ENCODE measurements at regions of chr5 and their contacts with region 1.

Region 1: GRCh38 chr5:179361037-179361603 is 15.9 kb upstream of the ADAMTS2 start:
- DNase-seq: no peak
- H3K4me3 ChIP-seq: no peak overlapping the region
- H3K27ac ChIP-seq: no peak overlapping the region
- H3K4me1 ChIP-seq: no peaks in the 10 kb centered on the region
- H3K27me3 ChIP-seq: no peaks in the 10 kb centered on the region
- CTCF ChIP-seq: peak in 2 of 3 experiments; percentile 12 to 23; a peak in 2 of 4 replicates
- EP300 ChIP-seq: no peak
- POLR2A ChIP-seq: no peak
- RAD21 ChIP-seq: peak in 1 of 2 experiments; percentile 30; a peak in 1 of 4 replicates

Region 2: GRCh38 chr5:179258922-179259730 is 102.0 kb before region 1 on chr5:
- CTCF ChIA-PET with region 1: no interaction called
- POLR2A ChIA-PET with region 1: no interaction called
- DNase-seq: peak in 1 of 2 experiments; percentile 41
- H3K4me3 ChIP-seq: no peak overlapping the region
- H3K27ac ChIP-seq: no peak overlapping the region
- H3K4me1 ChIP-seq: peaks cover 0 to 4% (median 2%) of the 10 kb centered on the region in 4 experiments; a peak in 3 of 7 replicates
- H3K27me3 ChIP-seq: no peaks in the 10 kb centered on the region
- CTCF ChIP-seq: no peak
- EP300 ChIP-seq: no peak
- POLR2A ChIP-seq: no peak
- RAD21 ChIP-seq: no peak

Region 3: DNA sequence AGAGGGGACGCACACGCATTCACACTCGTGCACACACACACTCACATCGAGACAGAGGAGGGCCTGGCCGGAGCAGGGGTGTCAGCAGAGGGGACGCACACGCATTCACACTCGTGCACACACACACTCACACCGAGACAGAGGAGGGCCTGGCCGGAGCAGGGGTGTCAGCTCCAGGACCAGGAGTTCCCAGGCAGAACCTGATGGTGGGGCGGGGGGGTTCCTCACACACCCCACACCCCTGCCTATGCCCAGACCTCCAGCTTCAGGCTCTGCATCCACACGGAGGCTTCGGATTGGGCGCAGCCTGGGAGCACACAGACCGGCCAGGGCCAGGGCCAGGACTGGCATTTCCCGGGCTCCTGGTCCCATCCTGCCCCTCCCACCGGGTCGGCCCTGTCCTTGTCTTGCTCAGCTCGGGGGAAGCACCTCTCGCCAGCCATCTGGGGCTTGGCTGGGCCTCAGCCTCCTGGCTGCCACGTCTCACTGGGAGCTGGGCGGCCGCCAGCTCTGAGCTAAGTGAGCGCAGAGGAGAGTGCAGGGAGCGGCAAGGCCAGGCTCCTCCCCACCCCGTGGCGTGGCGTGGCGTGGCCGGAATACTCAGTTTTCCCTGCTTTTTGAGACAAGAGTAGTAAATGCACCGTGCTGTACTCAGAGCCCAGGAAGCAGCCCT is 47.1 kb before region 1 on chr5:
- CTCF ChIA-PET with region 1: no interaction called
- POLR2A ChIA-PET with region 1: no interaction called
- DNase-seq: no peak
- H3K4me3 ChIP-seq: no peak overlapping the region
- H3K27ac ChIP-seq: no peak overlapping the region
- H3K4me1 ChIP-seq: no peaks in the 10 kb centered on the region; a peak in 1 of 7 replicates
- H3K27me3 ChIP-seq: no peaks in the 10 kb centered on the region
- CTCF ChIP-seq: no peak
- EP300 ChIP-seq: no peak
- POLR2A ChIP-seq: no peak
- RAD21 ChIP-seq: no peak

Region 4: GRCh38 chr5:179343719-179344430 is 17.2 kb before region 1 on chr5:
- CTCF ChIA-PET with region 1: interaction called, 12 read pairs
- POLR2A ChIA-PET with region 1: no interaction called
- DNase-seq: peak; percentile 61 to 95
- H3K4me3 ChIP-seq: peak overlapping the region; percentile 66 to 79 (median 70)
- H3K27ac ChIP-seq: no peak overlapping the region
- H3K4me1 ChIP-seq: peaks cover 3 to 15% (median 9%) of the 10 kb centered on the region in 4 experiments
- H3K27me3 ChIP-seq: peaks cover 11 to 57% (median 46%) of the 10 kb centered on the region in 4 experiments
- CTCF ChIP-seq: peak in 2 of 3 experiments; percentile 59 to 71; a peak in 3 of 4 replicates
- EP300 ChIP-seq: no peak
- POLR2A ChIP-seq: no peak
- RAD21 ChIP-seq: peak; percentile 53 to 68